Activated T-helper 2 cell treated with anti-CD3 and anti-CD28 coated beads, Interferon-gamma antibody, Interleukin-2, Interleukin-4, amounts not matched to agents 10 μg/mL and 5 μg/mL and 100 μg/mL, durations not matched to agents 14 hours and 24 hours and 36 hours (primary cell): ENCODE measurements at regions of chr19 and their contacts with region 1.

Region 1: DNA sequence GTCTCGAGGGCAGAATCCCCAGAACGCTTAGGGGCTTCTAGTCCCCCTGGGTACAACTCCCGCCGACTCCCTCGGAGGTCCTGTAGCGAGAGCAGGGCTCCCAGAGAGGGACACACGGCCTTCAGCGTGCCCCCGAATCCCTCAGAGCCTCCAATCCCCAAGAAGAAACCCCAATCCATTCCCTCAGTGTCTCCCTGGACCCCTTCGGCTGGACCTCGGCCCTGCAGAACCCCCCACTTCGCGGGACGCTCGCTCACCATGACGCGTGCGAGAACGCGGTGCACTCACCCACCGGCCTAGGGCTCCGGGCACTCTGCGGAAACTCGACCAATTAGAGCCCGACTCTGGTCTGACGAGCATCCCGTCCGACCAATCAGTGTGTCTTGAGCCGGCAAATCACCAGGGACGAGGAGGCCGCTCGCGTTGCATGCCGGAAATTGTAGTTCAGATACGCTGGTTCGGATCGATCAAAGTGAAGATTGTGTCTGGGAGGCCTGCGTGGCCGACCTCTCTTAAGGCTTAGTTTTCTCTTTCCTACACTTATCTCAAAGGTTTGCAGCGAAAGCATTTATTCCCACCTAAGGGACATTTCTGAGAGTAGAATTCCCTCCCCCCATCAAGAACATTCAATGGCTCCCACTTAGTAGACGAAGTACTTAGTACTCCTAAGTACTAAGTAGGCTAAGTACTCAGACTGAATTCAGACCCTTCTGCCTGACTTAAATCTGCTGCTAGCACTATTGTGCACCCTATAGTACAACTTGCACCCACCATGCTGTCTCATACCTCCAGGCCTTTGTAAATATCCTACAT is at the start of gene TMEM161A:
- DNase-seq: peak; percentile 98
- H3K4me3 Mint-ChIP-seq: peak within 1 kb of the TSS; percentile 91
- H3K27ac Mint-ChIP-seq: peak within 1 kb of the TSS; percentile 91
- H3K4me1 Mint-ChIP-seq: peaks cover 14% of the 10 kb centered on the region
- H3K27me3 Mint-ChIP-seq: no peaks in the 10 kb centered on the region
- total RNA-seq, gene TMEM161A: 41.4 TPM in 2 replicates

Region 2: GRCh38 chr19:18815673-18816072 is 322.7 kb before region 1 on chr19:
- intact Hi-C with region 1: no loop called
- DNase-seq: no peak
- H3K4me3 Mint-ChIP-seq: no peak overlapping the region
- H3K27ac Mint-ChIP-seq: no peak overlapping the region
- H3K4me1 Mint-ChIP-seq: no peaks in the 10 kb centered on the region
- H3K27me3 Mint-ChIP-seq: no peaks in the 10 kb centered on the region

Region 3: DNA sequence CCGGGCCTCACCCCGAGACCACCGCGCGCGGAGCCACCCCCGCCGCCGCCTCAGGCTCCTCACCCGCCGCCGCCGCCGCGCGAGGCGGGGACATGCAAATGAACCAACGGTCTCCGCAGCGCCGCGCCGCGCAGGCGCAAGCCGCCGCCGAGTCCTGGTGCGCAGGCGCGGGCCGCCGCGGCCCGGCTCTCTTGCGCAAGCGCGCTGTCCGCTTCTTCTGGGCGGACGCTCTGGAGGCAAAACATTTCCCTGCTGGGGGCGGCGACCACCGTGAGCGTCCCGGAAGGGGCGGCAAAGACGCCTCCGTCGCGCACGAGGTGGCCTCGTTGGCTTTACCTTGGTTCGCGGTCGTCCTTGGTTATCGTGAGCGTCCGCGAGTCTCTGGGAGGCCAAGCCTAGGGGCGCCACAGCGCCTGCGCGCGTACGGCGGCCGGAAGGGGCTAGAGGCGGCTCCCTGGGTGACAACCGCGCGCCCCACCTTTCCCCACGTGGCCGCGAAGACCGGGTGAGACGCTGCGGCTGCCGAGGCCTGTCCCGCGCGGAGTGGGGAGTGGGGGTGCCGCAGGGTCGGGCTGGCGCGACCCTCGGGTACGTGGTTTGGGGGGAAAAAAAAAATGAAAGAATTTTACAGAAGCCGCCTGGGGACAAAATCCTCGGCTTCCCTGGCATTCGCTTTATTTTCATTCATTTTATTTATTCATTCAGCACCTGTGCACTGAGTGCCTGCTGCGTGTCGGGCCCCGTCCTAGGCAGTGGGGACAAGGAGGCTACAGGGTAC is 104.8 kb before region 1 on chr19 and contains the starts of genes ARMC6 and SUGP2:
- intact Hi-C with region 1: loop called (anchors 1 kb)
- DNase-seq: peak; percentile 89
- H3K4me3 Mint-ChIP-seq: peak within 1 kb of the TSS; percentile 90
- H3K27ac Mint-ChIP-seq: peak within 1 kb of the TSS; percentile 92
- H3K4me1 Mint-ChIP-seq: peaks cover 26% of the 10 kb centered on the region
- H3K27me3 Mint-ChIP-seq: no peaks in the 10 kb centered on the region
- total RNA-seq, gene ARMC6: 44.9 and 53.9 TPM in 2 replicates
- total RNA-seq, gene SUGP2: 129 and 140 TPM in 2 replicates

Region 4: DNA sequence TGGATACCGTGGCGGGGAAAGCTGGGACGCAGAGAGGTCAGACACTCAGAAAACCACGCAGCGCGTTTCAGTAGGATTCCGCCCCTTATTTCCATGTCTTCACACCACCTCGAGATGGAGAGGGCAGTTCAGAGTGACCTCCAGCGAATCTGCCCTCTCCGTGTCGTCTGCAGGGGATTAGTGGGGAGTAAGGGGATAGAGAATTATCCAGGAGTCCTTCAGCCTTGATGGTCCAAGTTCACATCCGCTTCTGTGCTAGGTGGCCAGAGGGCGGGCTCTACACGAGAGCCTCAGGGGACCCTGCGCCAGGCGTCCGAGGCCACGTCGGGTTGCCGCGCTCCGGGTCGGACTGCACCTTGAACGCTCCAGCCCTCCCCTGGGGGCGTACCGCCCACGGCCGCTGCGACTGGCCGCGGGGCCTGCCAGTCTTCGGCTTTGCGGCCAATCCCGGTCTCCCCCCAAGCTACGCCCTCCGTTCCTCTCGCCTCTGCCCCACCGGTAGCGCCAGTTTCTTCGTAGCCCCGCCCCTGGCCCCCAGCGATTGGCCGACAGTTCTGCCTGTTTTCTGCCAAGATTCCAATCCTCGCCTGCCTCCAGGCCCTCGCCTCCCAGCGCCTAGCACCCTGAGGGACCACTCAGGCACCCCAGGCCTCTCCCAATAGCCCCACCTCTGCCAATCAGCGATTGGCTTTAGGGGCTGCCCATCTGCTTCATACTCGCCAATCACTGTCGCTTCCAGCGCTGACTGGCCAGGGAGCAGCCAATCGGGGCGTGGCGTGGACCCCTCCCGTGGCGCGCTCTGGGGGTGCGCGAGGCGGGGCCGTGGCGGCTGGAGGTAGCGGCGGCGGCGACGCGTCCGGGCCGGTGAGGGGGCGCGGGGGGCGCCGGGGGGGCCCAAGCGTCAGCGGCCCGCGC is 74.9 kb before region 1 on chr19 and contains the start of gene SLC25A42:
- intact Hi-C with region 1: loop called (anchors 2 kb)
- DNase-seq: peak; percentile 99
- H3K4me3 Mint-ChIP-seq: peak within 1 kb of the TSS; percentile 88
- H3K27ac Mint-ChIP-seq: peak within 1 kb of the TSS; percentile 80
- H3K4me1 Mint-ChIP-seq: peaks cover 25% of the 10 kb centered on the region
- H3K27me3 Mint-ChIP-seq: no peaks in the 10 kb centered on the region
- total RNA-seq, gene SLC25A42: 9.1 and 9.2 TPM in 2 replicates

Region 5: GRCh38 chr19:19259741-19260140 is 121.4 kb after region 1 on chr19:
- intact Hi-C with region 1: no loop called
- DNase-seq: no peak
- H3K4me3 Mint-ChIP-seq: no peak overlapping the region
- H3K27ac Mint-ChIP-seq: peak overlapping the region; percentile 28
- H3K4me1 Mint-ChIP-seq: no peaks in the 10 kb centered on the region
- H3K27me3 Mint-ChIP-seq: peaks cover 41% of the 10 kb centered on the region

Region 6: GRCh38 chr19:19320362-19321142 is 182.2 kb after region 1 on chr19 and contains the starts of genes MAU2 and SUGP1:
- intact Hi-C with region 1: loop called (anchors 1 kb)
- DNase-seq: peak; percentile 91
- H3K4me3 Mint-ChIP-seq: peak within 1 kb of the TSS; percentile 95
- H3K27ac Mint-ChIP-seq: peak within 1 kb of the TSS; percentile 100
- H3K4me1 Mint-ChIP-seq: peaks cover 29% of the 10 kb centered on the region
- H3K27me3 Mint-ChIP-seq: no peaks in the 10 kb centered on the region
- total RNA-seq, gene MAU2: 55.3 and 60.3 TPM in 2 replicates
- total RNA-seq, gene SUGP1: 67.6 and 73.4 TPM in 2 replicates

Region 7: GRCh38 chr19:19403373-19403901 is 265.1 kb after region 1 on chr19:
- intact Hi-C with region 1: no loop called
- DNase-seq: no peak
- H3K4me3 Mint-ChIP-seq: peak overlapping the region; percentile 47
- H3K27ac Mint-ChIP-seq: no peak overlapping the region
- H3K4me1 Mint-ChIP-seq: peaks cover 39% of the 10 kb centered on the region
- H3K27me3 Mint-ChIP-seq: no peaks in the 10 kb centered on the region

Region 8: GRCh38 chr19:19475849-19476828 is 337.8 kb after region 1 on chr19:
- intact Hi-C with region 1: no loop called
- DNase-seq: no peak
- H3K4me3 Mint-ChIP-seq: peak overlapping the region; percentile 47
- H3K27ac Mint-ChIP-seq: peak overlapping the region; percentile 70
- H3K4me1 Mint-ChIP-seq: peaks cover 72% of the 10 kb centered on the region
- H3K27me3 Mint-ChIP-seq: no peaks in the 10 kb centered on the region